ENCODE measurements at regions of chr6 and their contacts with region 1.

Region 1: GRCh38 chr6:150891888-150892485 is 26.5 kb downstream of the MTHFD1L start:
- H3K4me3 ChIP-seq: no peak overlapping the region
- H3K27ac ChIP-seq: no peak overlapping the region
- H3K4me1 ChIP-seq: peaks cover 6% of the 10 kb centered on the region; the same call in 1 of the 2 replicates
- CTCF ChIP-seq: peak; percentile 64

Region 2: DNA sequence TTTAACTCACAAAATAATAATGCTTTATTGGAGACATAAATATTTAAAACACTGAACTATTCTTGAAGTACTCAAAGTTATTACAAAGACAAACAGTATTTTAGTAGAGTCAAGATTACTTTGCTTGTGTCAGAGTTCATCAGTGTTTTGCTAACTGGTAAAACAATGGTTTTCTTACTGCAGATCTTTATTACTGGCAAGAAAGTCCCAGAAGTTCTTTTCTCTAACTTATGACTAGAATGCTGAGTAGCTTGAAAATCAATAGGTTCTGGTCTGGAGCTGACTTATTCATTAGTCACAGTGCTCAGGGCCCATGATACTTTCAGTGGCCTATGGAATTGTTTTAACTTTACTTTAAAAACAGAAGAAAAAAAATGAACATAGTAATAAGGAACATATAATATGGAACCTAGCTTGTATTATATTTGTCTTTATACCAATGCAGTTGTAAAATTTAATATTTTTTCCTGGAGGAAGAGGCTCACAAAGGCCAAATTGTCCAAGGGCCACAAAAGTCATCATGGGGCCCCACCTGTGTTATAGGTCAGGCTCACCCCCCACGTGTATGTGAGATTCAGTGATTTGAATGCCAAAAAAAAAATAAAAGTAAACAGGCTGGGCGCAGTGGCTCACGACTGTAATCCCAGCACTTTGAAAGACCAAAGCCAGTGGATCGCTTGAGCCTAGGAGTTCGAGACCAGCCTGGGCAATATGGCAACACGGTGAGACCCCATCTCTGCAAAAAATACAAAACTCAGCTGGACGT is 239.0 kb before region 1 on chr6:
- CTCF ChIA-PET with region 1: no interaction called
- POLR2A ChIA-PET with region 1: no interaction called
- H3K4me3 ChIP-seq: no peak overlapping the region
- H3K27ac ChIP-seq: no peak overlapping the region
- H3K4me1 ChIP-seq: peaks cover 3% of the 10 kb centered on the region; the same call in 1 of the 2 replicates
- CTCF ChIP-seq: no peak

Region 3: GRCh38 chr6:150822932-150823331 is 69.1 kb before region 1 on chr6:
- CTCF ChIA-PET with region 1: interaction called, 58 read pairs
- POLR2A ChIA-PET with region 1: no interaction called
- H3K4me3 ChIP-seq: no peak overlapping the region
- H3K27ac ChIP-seq: no peak overlapping the region
- H3K4me1 ChIP-seq: no peaks in the 10 kb centered on the region
- CTCF ChIP-seq: no peak

Region 4: DNA sequence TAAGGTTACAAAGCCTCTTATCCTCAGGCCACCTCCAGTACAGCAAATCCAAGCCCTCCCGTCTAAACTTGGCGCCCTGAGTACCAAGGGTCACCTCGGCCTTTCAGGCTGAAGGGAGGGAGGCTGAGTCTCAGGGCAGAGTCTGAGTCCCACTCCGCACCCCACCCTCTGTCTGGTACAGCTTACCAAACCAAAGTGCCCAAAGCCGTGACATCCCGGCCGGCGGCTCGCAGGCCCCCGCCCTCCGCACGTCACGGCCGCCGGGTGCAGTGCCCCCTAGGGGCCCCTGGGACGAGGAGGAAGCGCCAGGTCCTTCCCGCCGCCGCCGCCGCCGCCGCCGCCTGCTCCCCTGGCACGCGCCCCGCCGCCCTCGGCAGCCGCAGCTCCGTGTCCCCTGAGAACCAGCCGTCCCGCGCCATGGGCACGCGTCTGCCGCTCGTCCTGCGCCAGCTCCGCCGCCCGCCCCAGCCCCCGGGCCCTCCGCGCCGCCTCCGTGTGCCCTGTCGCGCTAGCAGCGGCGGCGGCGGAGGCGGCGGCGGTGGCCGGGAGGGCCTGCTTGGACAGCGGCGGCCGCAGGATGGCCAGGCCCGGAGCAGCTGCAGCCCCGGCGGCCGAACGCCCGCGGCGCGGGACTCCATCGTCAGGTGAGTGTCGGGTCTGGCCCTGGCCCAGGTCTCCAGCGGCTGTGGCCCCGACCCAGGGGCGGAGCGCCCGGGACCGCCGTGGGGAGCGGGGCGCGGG is 26.4 kb before region 1 on chr6 and contains the start of gene MTHFD1L:
- CTCF ChIA-PET with region 1: interaction called, 16 read pairs
- POLR2A ChIA-PET with region 1: interaction called, 7 read pairs
- H3K4me3 ChIP-seq: peak within 1 kb of the TSS; percentile 78
- H3K27ac ChIP-seq: peak within 1 kb of the TSS; percentile 98
- H3K4me1 ChIP-seq: peaks cover 8% of the 10 kb centered on the region
- CTCF ChIP-seq: peak; percentile 72

Region 5: DNA sequence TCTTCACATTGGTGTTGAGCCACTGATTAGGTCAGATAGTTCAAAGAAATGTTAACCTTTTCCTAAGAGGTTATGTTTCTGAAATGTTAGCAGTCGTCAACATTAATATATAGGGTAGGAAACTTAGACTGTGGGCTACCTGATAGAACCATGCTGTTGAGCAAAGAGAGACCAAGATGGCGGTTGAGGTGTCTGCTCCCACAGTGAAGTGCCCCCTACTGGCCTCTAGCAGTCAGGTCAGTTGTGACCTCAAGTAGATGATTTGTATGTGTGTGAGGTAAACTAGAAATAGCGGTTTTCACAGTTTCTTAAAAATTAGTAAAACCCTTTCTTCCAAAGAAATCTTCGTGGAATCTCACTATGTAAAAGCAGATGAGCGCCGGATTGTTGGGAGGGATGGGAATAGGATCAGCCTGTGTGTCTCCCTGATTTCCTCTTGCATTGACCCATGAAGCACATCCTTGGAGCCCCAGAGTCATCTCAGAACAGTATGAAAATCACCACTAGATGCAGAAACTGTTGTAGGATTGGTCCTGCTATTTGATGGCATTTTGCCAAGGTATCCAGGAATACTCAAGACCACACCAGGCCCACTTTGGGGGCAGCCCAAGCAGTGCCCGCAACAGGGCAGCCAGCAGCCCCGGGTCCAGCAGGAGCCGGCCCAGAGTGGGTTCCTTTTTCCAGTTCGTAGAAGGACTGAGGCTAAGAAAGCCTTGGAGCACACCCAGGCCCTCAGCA is 14.0 kb after region 1 on chr6:
- CTCF ChIA-PET with region 1: interaction called, 57 read pairs
- POLR2A ChIA-PET with region 1: no interaction called
- H3K4me3 ChIP-seq: no peak overlapping the region
- H3K27ac ChIP-seq: no peak overlapping the region
- H3K4me1 ChIP-seq: no peaks in the 10 kb centered on the region
- CTCF ChIP-seq: no peak

Region 6: DNA sequence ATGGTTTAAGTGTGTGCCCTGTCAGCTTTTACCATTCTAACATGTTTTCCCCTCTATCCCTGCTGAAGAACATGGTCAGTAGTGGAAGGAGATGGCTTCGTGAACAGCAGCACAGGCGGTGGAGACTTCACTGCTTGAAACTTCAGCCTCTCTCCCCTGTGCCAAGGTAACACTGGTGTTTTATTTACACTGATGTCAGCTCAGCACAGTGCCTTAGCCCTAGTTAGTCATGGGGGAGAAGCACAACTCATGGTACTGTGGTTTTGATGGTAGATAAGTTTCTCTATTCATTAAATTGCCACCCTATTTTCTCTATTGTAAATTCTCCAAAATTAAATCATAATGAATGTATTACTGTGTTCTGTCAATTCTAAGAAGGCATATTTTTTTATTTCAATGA is 30.1 kb after region 1 on chr6:
- CTCF ChIA-PET with region 1: interaction called, 10 read pairs
- POLR2A ChIA-PET with region 1: no interaction called
- H3K4me3 ChIP-seq: no peak overlapping the region
- H3K27ac ChIP-seq: no peak overlapping the region
- H3K4me1 ChIP-seq: no peaks in the 10 kb centered on the region
- CTCF ChIP-seq: no peak

Region 7: GRCh38 chr6:150928882-150929281 is 36.9 kb after region 1 on chr6:
- CTCF ChIA-PET with region 1: interaction called, 23 read pairs
- POLR2A ChIA-PET with region 1: no interaction called
- H3K4me3 ChIP-seq: no peak overlapping the region
- H3K27ac ChIP-seq: no peak overlapping the region
- H3K4me1 ChIP-seq: no peaks in the 10 kb centered on the region
- CTCF ChIP-seq: 0 out of 2 replicates have a peak, but pooled peaks have one; percentile 16

Region 8: DNA sequence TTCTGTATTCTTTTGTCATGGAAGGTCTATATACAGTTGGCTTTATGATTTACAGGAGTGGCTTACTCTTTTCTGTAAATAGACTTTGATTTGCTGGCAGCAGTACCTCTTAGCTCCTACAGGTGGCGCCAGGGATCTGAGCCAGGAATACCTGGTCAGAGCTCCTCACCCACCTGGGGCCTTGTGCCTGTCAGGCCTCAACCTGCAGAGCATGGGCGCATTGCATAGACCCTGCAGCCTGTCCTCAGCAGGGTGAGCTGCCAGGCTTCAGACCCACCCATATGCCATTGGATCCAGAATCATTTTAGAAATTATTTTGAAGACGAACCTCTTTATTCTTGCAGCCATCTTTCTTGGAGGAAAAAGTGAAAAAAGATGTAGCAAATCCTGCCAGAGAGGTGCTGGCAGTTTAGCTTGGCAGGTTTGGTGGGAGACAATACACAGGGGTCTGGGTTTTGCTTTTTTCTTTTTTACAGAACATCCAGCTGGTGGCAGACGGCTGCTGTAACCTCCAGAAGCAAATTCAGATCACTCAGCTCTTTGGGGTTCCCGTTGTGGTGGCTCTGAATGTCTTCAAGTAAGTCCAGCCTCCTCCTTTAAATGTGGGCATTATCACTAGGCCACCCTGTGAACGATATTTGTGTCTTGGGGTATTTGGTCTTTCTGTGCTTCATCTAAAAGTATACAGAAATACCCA is 122.6 kb after region 1 on chr6:
- CTCF ChIA-PET with region 1: interaction called, 16 read pairs
- POLR2A ChIA-PET with region 1: no interaction called
- H3K4me3 ChIP-seq: no peak overlapping the region
- H3K27ac ChIP-seq: no peak overlapping the region
- H3K4me1 ChIP-seq: no peaks in the 10 kb centered on the region
- CTCF ChIP-seq: peak; percentile 68